ENCODE measurements at regions of chr22 and their contacts with region 1.

Region 1: DNA sequence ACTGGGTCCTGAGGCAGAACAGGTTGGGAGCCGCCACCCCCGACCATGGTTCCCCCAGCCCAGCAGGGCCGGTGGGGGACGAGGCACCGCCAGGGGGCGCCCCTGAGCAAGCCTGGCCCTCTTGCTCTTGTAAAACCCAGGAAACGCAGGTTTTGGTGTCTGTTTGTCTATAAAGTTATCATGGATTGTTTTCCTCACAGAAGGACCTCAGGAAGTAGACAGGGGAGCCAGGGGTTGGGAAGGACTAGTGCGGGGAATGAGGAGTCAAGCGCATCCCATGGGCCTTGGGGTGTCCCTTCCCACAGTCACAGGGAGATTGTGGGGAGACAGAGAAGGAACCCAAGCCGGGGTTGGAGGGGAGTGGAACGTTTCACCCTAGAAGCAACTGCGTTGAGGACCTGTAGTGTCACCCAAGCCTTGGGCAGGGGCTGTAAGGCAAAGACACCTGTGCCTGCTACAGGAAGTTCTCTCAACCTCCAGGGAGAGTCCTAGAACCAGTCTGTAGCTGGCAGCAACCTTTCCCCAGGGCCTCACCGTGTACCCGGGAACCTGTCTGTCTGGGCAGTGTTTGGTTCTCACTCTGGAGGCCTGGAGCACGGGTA is 26.4 kb downstream of the KCTD17 start:
- DNase-seq: peak; percentile 81
- ATAC-seq: peak; percentile 60
- H3K4me3 Mint-ChIP-seq: no peak overlapping the region
- H3K27ac Mint-ChIP-seq: peak overlapping the region; percentile 50
- H3K4me1 Mint-ChIP-seq: peaks cover 25% of the 10 kb centered on the region
- H3K27me3 Mint-ChIP-seq: no peaks in the 10 kb centered on the region
- CTCF ChIP-seq: peak; percentile 87

Region 2: GRCh38 chr22:37139762-37140161 is 61.8 kb after region 1 on chr22:
- CTCF ChIA-PET with region 1: no interaction called
- POLR2A ChIA-PET with region 1: no interaction called
- intact Hi-C with region 1: loop called (anchors 5 kb)
- DNase-seq: no peak
- ATAC-seq: peak; percentile 62
- H3K4me3 Mint-ChIP-seq: no peak overlapping the region
- H3K27ac Mint-ChIP-seq: peak overlapping the region; percentile 51
- H3K4me1 Mint-ChIP-seq: peaks cover 20% of the 10 kb centered on the region
- H3K27me3 Mint-ChIP-seq: no peaks in the 10 kb centered on the region
- CTCF ChIP-seq: no peak

Region 3: GRCh38 chr22:37457093-37457893 is 379.3 kb after region 1 on chr22:
- CTCF ChIA-PET with region 1: no interaction called
- POLR2A ChIA-PET with region 1: no interaction called
- intact Hi-C with region 1: loop called (anchors 1 kb)
- DNase-seq: peak; percentile 71
- ATAC-seq: peak; percentile 95
- H3K4me3 Mint-ChIP-seq: no peak overlapping the region
- H3K27ac Mint-ChIP-seq: no peak overlapping the region
- H3K4me1 Mint-ChIP-seq: no peaks in the 10 kb centered on the region
- H3K27me3 Mint-ChIP-seq: no peaks in the 10 kb centered on the region
- CTCF ChIP-seq: peak; percentile 42